ENCODE measurements at regions of chr1 and their contacts with region 1.

Region 1: DNA sequence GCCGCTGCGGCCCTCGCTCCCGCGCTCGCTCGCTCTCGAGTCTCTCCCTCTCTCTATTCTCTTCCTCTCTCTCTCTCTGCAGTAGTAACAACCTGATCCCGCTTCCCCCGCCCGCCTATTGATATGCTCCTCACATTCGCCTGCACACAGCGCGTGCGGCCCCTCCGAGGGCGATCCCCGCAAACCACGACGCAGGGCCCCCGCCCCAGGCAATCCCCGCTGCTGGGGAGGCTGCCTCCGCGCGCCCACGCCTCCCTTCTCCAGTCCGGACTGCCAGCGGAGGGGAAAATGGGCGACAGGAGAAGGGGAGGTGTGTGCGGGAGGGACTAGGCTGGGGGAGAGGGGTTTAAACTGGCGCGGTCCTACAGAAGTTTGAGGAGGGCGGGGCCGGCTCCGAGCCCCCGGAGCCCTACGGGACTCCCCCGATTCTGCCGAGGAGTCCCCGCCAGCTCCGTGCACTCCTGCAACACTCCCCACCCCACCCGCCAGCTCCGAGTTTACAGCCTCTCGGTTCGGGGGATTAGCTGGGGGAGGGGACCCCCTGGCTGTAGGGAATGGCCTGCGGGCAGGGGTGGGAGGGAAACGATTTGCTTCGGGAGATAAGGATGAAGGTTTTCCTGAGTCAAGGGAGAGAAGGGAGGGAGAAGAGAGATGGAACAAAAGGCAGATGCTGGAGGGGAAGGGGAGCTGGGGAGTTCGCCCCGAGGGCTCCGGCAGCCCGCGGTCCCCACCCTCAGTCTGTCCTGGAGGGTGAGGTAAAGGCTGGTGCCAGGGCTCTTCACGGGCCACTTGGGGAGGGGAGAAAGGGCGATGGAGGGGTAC is 66.6 kb downstream of the SYT2 start:
- DNase-seq: peak in 2 of 6 donors; percentile 59 to 67
- ATAC-seq: peak; percentile 48 to 76 (median 66)
- H3K4me3 ChIP-seq: peak overlapping the region in 3 of 4 donors; percentile 3 to 45 (median 33)
- H3K27ac ChIP-seq: no peak overlapping the region
- H3K4me1 ChIP-seq: peaks cover 0 to 4% (median 0%) of the 10 kb centered on the region in 3 donors
- H3K27me3 ChIP-seq: no peaks in the 10 kb centered on the region
- CTCF ChIP-seq: no peak

Region 2: GRCh38 chr1:202589190-202590030 is 54.2 kb before region 1 on chr1:
- intact Hi-C with region 1: loop called in 1 of 3 experiments (anchors 10 kb)
- DNase-seq: peak in 4 of 6 donors; percentile 56 to 74 (median 62)
- ATAC-seq: peak; percentile 65 to 86 (median 83)
- H3K4me3 ChIP-seq: no peak overlapping the region
- H3K27ac ChIP-seq: peak overlapping the region in 3 of 4 donors; percentile 13 to 82 (median 82)
- H3K4me1 ChIP-seq: peaks cover 0 to 2% (median 0%) of the 10 kb centered on the region in 3 donors
- H3K27me3 ChIP-seq: no peaks in the 10 kb centered on the region
- CTCF ChIP-seq: no peak

Measured in pancreas (tissue), 10 donors.